Adrenal gland (tissue), 19 donors: ENCODE measurements at regions of chr20 and their contacts with region 1.

Region 1: DNA sequence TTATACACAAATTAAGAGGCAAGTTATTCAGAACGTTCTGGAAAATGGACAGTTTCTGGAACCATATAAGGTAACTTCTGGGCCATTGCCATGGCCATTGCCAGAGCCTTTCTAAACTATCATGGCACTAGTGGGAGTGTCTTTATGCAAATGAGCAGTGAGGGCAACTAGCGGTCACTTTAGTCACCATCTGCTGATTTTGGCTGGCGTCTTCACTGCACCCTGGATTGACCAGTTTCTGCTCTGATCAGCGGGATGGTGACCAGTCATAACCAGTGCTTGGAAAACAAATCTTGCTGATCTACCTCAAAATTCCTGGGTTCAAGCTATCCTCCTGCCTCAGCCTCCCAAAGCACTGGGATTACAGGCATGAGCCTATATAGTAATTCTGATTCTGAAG is 7.3 kb upstream of the SNTA1 start:
- DNase-seq: peak in 6 of 7 donors; percentile 37 to 64 (median 54)
- H3K4me3 ChIP-seq: no peak overlapping the region
- H3K27ac ChIP-seq: peak overlapping the region in 1 of 5 donors; percentile 21
- H3K4me1 ChIP-seq: no peaks in the 10 kb centered on the region
- H3K27me3 ChIP-seq: no peaks in the 10 kb centered on the region
- CTCF ChIP-seq: no peak
- POLR2A ChIP-seq: no peak

Region 2: DNA sequence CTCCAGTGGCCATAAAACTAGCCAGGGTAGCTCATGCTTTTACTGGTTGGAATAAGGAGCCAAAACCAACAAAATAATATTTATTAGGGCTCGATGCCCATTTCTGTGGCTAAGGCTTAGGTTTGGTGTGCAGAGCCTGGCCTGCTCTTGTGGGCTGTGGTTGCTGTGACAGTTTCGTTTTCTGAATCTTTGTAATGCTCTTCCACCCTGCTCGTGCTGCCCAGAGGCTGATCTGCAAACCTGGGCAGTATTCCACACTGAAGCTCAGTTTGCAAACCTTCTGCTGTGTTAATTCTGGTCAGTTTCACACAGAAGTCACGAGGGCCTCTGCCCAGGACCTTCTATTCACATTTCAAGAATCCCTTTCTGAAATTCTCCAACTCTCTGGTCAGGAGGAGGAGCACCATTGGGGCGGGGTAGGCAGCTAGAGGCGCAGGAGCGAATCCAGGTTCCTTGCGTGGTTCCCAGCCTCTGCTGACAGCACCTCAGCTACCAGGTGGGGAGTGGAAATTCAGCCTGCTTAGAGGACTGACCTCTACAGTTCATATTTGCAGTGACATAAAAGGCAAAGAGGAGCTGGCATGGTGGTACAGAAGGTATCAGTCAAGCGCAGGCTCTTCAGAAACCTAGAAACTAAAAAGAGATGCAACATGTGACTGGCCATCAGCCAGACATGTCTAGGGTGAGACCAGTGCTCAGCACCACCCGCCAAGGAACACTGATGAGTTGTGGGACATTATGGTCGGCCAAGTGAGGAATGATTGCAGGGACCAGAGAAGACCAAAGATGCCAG is 196.9 kb after region 1 on chr20:
- intact Hi-C with region 1: loop called in 1 of 2 experiments (anchors 5 kb)
- DNase-seq: no peak
- H3K4me3 ChIP-seq: no peak overlapping the region
- H3K27ac ChIP-seq: no peak overlapping the region
- H3K4me1 ChIP-seq: peaks cover 0 to 2% of the 10 kb centered on the region in 2 donors
- H3K27me3 ChIP-seq: no peaks in the 10 kb centered on the region
- CTCF ChIP-seq: no peak
- POLR2A ChIP-seq: no peak

Region 3: GRCh38 chr20:33663161-33664094 is 212.6 kb after region 1 on chr20:
- intact Hi-C with region 1: loop called in 1 of 2 experiments (anchors 5 kb)
- DNase-seq: peak; percentile 76 to 86 (median 83)
- H3K4me3 ChIP-seq: peak overlapping the region; percentile 11 to 75 (median 39)
- H3K27ac ChIP-seq: peak overlapping the region in 4 of 5 donors; percentile 62 to 91 (median 78)
- H3K4me1 ChIP-seq: peaks cover 27 to 38% of the 10 kb centered on the region in 2 donors
- H3K27me3 ChIP-seq: no peaks in the 10 kb centered on the region
- CTCF ChIP-seq: no peak
- POLR2A ChIP-seq: peak; percentile 54 to 57

Region 4: DNA sequence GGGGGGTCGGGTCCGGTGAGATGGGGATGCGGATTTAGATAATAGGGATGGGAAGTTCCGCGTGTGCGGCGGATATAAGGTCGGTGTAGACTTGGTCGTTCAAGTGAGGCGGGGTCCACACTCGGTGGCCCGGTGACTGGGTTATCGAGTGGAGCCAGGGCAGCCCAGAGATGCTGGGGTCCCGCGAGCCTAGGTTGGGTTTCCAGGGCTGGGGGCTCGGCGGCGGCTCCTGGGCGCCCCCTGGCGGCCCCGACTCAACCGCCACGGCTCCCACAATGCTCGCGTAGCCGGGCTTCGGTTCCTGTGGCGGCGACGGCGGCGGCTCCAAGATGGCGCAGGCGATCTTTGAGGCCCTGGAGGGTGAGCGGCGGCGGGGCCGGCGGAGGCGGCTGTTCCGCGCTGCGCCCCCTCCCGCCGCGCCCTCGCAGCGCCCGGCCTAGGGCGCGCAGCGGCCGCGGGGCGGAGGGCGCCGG is 280.9 kb after region 1 on chr20 and contains the start of gene ZNF341:
- intact Hi-C with region 1: loop called in 1 of 2 experiments (anchors 10 kb)
- DNase-seq: peak; percentile 89 to 94 (median 91)
- H3K4me3 ChIP-seq: peak within 1 kb of the TSS; percentile 13 to 66 (median 62)
- H3K27ac ChIP-seq: peak within 1 kb of the TSS; percentile 53 to 96 (median 76)
- H3K4me1 ChIP-seq: peaks cover 5 to 24% of the 10 kb centered on the region in 2 donors
- H3K27me3 ChIP-seq: no peaks in the 10 kb centered on the region
- CTCF ChIP-seq: peak; percentile 69 to 92 (median 82)
- POLR2A ChIP-seq: peak; percentile 44 to 51
- total RNA-seq, gene ZNF341: 1.1 to 4.8 (median 2.1) TPM